Activated T-helper 1 cell treated with anti-CD3 and anti-CD28 coated beads, Interleukin-12 subunit alpha, Interleukin-12 subunit beta, Interleukin-2, Interleukin-4 antibody, amounts not matched to agents 30 ng/mL and 10 ng/mL and 1 ng/mL, durations not matched to agents 14 hours and 24 hours and 36 hours (primary cell): ENCODE measurements at regions of chr7 and their contacts with region 1.

Region 1: DNA sequence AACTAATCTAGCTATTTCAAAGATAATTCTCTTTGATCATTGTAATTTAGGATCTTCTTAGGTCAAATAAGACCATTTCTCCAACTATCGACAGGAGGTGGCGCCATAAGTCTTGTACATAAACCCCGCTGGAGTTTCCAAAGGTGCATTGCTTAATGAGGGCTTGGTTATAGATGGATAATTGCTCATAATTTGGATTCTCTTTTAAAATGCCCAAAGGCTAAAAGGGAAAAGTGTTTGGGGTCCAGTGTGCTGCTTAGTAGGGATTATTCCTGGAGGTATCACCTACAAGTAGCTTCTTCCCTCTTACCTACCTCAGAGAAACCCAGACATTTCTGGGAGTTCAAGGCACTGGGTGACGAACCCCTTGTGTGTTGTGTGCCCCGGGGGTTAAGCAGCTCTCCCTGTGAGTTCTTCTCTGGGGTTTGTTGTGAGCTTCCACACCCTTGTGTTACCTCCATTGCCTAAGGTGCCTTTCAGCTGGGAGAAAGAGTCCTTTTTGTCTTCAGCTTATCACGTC is 75.2 kb downstream of the PAXIP1 start:
- DNase-seq: peak; percentile 53
- H3K4me3 Mint-ChIP-seq: peak overlapping the region; percentile 94
- H3K27ac Mint-ChIP-seq: peak overlapping the region; percentile 93
- H3K4me1 Mint-ChIP-seq: peaks cover 25% of the 10 kb centered on the region
- H3K27me3 Mint-ChIP-seq: peaks cover 27% of the 10 kb centered on the region

Region 2: GRCh38 chr7:154546946-154547587 is 380.6 kb before region 1 on chr7:
- intact Hi-C with region 1: no loop called
- DNase-seq: no peak
- H3K4me3 Mint-ChIP-seq: no peak overlapping the region
- H3K27ac Mint-ChIP-seq: no peak overlapping the region
- H3K4me1 Mint-ChIP-seq: no peaks in the 10 kb centered on the region
- H3K27me3 Mint-ChIP-seq: no peaks in the 10 kb centered on the region

Region 3: GRCh38 chr7:154913638-154914312 is 13.9 kb before region 1 on chr7:
- intact Hi-C with region 1: loop called (anchors 1 kb)
- DNase-seq: peak; percentile 75
- H3K4me3 Mint-ChIP-seq: peak overlapping the region; percentile 68
- H3K27ac Mint-ChIP-seq: no peak overlapping the region
- H3K4me1 Mint-ChIP-seq: peaks cover 4% of the 10 kb centered on the region
- H3K27me3 Mint-ChIP-seq: peaks cover 19% of the 10 kb centered on the region

Region 4: GRCh38 chr7:155009570-155010157 is 82.0 kb after region 1 on chr7:
- intact Hi-C with region 1: loop called (anchors 1 kb)
- DNase-seq: no peak
- H3K4me3 Mint-ChIP-seq: no peak overlapping the region
- H3K27ac Mint-ChIP-seq: no peak overlapping the region
- H3K4me1 Mint-ChIP-seq: peaks cover 2% of the 10 kb centered on the region
- H3K27me3 Mint-ChIP-seq: peaks cover 9% of the 10 kb centered on the region

Region 5: GRCh38 chr7:155205368-155206317 is 278.0 kb after region 1 on chr7:
- intact Hi-C with region 1: loop called (anchors 1 kb)
- DNase-seq: peak; percentile 86
- H3K4me3 Mint-ChIP-seq: peak overlapping the region; percentile 84
- H3K27ac Mint-ChIP-seq: peak overlapping the region; percentile 99
- H3K4me1 Mint-ChIP-seq: peaks cover 31% of the 10 kb centered on the region
- H3K27me3 Mint-ChIP-seq: no peaks in the 10 kb centered on the region

Region 6: DNA sequence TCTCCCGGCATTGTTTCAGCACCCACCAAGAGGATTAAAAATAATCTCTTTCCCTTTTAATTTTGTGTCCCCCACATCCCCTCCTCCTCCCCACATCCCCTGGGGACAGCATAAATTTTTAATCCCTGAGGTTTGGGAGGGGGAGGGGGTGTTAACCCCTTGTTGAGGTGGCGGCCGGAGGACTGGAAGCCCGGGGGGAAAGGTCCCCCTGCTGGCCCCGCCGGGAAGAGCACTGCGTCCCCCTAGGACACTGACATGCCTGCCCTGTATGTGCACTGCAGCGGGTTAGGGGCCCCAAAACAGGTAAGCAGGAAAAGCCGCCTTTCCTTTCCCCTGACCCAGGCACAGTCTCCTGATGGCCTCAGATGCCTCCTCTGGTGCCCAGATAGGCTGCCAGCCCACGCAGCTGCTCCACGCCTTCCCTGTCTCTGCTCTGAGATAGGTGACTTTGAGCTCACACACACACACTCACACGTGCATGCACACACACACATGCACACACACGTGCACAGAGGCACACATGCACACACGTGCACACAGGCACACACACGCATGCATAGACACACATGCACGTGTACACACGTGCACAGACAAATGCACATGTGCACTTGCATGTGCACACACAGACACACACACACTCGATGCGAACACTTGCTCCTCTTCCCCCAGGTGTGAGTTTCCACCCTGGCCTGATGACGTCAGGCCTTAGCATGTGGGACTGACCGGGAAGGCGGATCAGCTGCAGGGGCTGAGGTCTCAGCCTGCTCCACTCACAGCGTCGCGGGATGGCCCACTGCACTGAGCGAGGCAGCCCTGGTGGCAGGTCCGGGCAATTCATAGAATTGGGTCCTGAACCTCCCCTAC is 606.4 kb after region 1 on chr7:
- intact Hi-C with region 1: loop called (anchors 10 kb)
- DNase-seq: no peak
- H3K4me3 Mint-ChIP-seq: no peak overlapping the region
- H3K27ac Mint-ChIP-seq: no peak overlapping the region
- H3K4me1 Mint-ChIP-seq: peaks cover 11% of the 10 kb centered on the region
- H3K27me3 Mint-ChIP-seq: peaks cover 61% of the 10 kb centered on the region

Region 7: DNA sequence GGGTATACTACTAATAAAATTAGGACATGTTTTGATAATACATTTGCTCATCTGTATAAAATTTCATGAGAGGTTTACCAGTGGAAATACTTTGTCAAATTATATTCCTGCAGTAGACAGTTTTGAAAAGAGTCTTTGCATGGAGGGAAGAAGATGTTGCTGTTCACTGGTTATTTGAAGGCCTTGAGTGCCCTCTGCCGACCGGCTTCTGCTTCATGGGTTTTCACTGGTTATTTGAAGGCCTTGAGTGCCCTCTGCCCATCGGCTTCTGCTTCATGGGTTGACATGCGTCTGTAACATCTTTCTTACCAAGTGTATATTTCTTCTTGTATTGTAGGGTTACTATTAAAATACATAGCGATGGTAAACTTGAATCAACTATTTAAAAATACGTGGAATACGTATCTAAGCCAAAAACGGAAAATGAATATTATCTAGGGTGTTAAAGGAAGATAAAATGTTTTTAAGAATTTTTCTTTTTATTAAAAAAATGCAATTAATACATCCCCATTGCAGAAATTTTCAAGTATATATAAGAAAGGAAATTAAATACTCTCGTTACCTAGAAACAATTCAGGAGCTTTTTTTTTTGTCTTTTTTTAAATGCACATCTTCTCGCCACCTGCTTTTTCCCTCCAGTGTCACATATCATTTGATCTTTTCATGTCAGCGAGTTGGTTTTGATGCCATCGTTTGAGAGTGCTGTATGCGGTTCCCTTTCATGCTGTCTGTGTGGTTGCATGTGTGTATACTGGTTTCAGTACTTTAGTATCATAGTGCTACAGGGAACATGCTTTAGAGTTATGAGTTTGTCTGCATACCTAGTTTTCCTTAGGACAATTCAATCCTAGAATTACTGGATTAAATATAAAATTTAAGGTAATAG is 811.2 kb after region 1 on chr7:
- intact Hi-C with region 1: loop called (anchors 1 kb)
- DNase-seq: peak; percentile 44
- H3K4me3 Mint-ChIP-seq: peak overlapping the region; percentile 67
- H3K27ac Mint-ChIP-seq: peak overlapping the region; percentile 79
- H3K4me1 Mint-ChIP-seq: peaks cover 65% of the 10 kb centered on the region
- H3K27me3 Mint-ChIP-seq: no peaks in the 10 kb centered on the region